SK-N-SH (cell line): ENCODE measurements at regions of chr10 and their contacts with region 1.

Region 1: DNA sequence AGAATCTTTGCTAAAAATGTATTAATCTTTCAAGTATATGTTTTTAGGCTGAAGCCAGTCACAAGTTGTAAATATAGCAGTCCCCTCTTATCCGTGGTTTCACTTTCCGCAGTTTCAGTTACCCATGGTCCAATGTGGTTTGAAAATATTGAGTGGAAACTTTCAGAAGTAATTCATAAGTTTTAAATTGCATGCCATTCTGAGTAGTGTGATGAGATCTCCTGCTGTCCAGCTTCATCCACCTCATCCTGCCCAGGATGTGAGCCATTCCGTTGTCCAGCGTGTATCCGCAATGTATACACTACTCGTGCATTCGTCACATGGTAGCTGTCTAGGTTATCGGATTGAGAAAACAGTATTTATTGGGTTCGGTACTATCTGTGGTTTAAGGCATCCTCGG is 12.2 kb downstream of the PDCD4 start:
- DNase-seq: no peak
- H3K4me3 ChIP-seq: no peak overlapping the region
- H3K27ac ChIP-seq: no peak overlapping the region; a peak in 1 of 4 replicates
- H3K4me1 ChIP-seq: no peaks in the 10 kb centered on the region; a peak in 2 of 4 replicates
- H3K27me3 ChIP-seq: no peaks in the 10 kb centered on the region
- CTCF ChIP-seq: no peak
- EP300 ChIP-seq: no peak
- RAD21 ChIP-seq: no peak

Region 2: DNA sequence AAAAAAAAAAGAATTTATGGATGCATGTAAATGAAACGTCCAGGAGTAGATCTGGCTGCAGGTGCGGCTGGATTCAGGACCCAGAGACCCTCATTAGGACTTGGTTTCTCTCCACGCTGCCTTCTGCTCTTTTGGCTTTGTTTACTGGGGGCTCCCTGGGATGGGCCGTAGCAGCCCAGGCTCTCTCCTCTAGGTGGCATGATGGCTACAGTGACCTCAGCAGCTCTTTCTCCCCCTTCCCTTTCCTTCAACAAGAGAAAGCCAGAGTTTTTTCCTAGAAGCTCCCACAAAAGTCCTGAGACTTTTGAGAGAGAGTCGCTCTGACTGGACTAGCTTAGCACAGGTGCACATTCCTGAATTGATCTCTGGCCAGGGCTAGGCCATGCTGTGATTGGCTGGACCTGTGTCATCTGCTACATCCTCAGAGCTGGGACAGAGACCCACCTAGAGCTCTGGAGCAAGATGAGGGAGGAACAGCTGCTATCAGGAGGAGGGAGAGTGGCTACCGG is 80.0 kb before region 1 on chr10:
- CTCF ChIA-PET with region 1: interaction called, 17 read pairs
- POLR2A ChIA-PET with region 1: no interaction called
- DNase-seq: peak; percentile 72
- H3K4me3 ChIP-seq: no peak overlapping the region
- H3K27ac ChIP-seq: peak overlapping the region in 1 of 2 experiments; percentile 68; a peak in 2 of 4 replicates
- H3K4me1 ChIP-seq: peaks cover 8 to 33% of the 10 kb centered on the region in 2 experiments; a peak in 3 of 4 replicates
- H3K27me3 ChIP-seq: no peaks in the 10 kb centered on the region
- CTCF ChIP-seq: peak; percentile 53
- EP300 ChIP-seq: no peak
- RAD21 ChIP-seq: peak; percentile 80

Region 3: DNA sequence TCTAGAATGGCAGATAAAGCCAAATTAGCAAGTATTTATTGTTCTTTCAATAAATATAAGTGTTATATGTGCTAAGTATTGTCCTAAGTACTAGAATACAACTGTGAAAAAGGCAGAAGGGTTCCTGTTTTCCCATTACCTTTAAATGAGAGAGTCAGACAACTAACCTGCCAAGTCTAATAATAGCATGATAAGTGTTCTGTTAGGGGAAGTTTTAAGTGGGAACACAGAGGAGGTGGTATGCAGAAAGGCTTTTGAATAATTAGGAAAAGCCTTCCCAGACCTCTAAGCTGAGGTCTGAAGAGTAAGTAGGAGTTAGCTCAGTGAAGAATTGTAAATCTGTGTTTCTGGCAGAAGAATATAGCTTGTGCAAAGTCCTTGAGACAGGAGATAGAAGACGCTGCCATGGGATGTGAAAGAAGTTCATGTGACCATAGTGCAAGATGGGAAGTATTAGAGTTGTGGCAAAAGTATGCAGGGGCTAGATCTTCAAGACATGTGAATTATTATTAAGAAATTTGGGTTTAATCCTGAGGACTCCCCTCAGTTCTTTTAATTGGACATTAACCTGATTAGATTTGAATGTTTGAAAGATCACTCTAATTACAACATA is 48.0 kb after region 1 on chr10:
- CTCF ChIA-PET with region 1: no interaction called
- POLR2A ChIA-PET with region 1: no interaction called
- DNase-seq: no peak
- H3K4me3 ChIP-seq: no peak overlapping the region
- H3K27ac ChIP-seq: no peak overlapping the region
- H3K4me1 ChIP-seq: peaks cover 0 to 3% of the 10 kb centered on the region in 2 experiments; a peak in 2 of 4 replicates
- H3K27me3 ChIP-seq: no peaks in the 10 kb centered on the region
- CTCF ChIP-seq: no peak
- EP300 ChIP-seq: no peak
- RAD21 ChIP-seq: no peak